ENCODE measurements at regions of chr4 and their contacts with region 1.

Region 1: GRCh38 chr4:10715696-10716095 is 31.1 kb upstream of the CLNK start:
- DNase-seq: no peak
- H3K4me3 ChIP-seq: no peak overlapping the region
- CTCF ChIP-seq: no peak

Region 2: DNA sequence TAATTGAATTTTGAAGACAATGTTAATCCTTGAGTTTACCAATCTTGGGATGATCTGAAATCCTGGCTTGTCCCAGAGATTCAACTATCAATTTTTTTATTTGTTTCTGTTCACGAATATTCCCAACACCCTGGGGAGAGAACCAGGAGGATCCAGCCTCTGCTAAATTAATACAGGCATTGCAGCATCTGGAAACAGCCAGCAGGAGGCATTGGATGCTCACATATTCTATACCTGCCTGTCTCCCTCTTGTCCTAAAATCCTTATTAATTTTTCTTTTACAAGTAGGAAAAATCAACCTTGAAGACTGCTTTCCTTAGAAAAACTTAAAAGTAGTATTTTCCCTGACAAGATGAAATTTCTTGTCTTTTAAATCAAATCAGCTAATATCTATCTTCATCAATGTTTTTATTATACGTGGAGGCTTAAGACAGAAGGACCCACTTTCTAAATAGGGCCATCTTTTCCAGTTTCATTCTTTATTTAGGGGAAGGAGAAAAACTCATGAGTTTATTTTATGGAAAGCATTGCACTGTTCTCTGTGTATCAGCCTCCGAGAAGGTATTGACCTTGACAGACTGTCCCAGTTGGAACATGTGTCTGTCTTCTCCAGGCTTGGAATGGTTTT is 133.5 kb before region 1 on chr4:
- CTCF ChIA-PET with region 1: interaction called, 15 read pairs
- POLR2A ChIA-PET with region 1: no interaction called
- DNase-seq: no peak
- H3K4me3 ChIP-seq: no peak overlapping the region
- CTCF ChIP-seq: peak; percentile 83

Region 3: GRCh38 chr4:10983268-10983667 is 267.6 kb after region 1 on chr4:
- CTCF ChIA-PET with region 1: no interaction called
- POLR2A ChIA-PET with region 1: no interaction called
- DNase-seq: no peak
- H3K4me3 ChIP-seq: no peak overlapping the region
- CTCF ChIP-seq: no peak